CD8-positive, alpha-beta T cell (primary cell): ENCODE measurements at regions of chr12 and their contacts with region 1.

Region 1: DNA sequence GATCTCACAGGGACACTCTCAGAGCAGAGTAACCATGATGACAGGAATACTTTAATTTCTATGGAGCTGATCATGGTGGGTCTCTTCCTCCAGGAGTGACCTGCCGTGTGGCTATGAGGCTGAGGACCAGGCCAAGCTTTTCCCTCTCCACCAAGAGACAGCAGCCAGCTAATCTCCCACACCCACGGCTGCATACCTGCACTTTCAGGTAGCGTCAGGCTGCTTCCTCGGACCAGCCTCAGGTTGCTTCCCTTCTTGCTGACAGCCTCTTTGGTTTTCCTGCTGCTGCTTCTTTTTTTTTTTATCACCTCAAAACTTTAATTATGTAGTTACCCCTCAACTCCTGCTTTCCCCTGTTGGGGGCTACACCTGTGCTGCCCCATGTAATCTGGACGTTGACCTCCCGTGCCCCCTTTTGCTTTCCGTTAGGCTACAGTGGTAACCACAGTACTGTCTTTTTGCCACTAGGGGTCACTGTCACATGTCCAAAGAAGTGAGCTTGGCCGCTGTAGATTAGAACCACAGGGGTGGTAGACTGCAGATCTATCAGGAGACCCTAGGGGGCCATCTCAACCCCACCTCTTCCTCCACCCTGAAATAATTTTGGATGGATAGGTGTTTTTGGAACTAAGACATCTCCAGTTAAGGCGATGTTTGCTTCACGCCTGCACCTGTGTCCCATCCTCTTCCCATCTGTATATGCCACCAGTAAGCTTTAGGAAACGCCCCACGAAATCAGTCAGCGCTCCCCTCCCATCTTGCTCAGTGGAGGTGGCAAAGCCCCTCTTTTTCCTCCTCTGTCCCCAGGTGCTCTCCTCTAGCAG is 7.8 kb upstream of the PIP4K2C start:
- DNase-seq: peak; percentile 30 to 90 (median 74)
- ATAC-seq: peak; percentile 100
- H3K4me3 ChIP-seq: no peak overlapping the region
- H3K4me3 Mint-ChIP-seq: no peak overlapping the region
- H3K27ac ChIP-seq: no peak overlapping the region
- H3K27ac Mint-ChIP-seq: no peak overlapping the region
- H3K4me1 ChIP-seq: no peaks in the 10 kb centered on the region
- H3K4me1 Mint-ChIP-seq: peaks cover 2% of the 10 kb centered on the region
- H3K27me3 ChIP-seq: peaks cover 0 to 7% of the 10 kb centered on the region in 2 experiments
- H3K27me3 Mint-ChIP-seq: no peaks in the 10 kb centered on the region
- CTCF ChIP-seq: peak; percentile 95

Region 2: DNA sequence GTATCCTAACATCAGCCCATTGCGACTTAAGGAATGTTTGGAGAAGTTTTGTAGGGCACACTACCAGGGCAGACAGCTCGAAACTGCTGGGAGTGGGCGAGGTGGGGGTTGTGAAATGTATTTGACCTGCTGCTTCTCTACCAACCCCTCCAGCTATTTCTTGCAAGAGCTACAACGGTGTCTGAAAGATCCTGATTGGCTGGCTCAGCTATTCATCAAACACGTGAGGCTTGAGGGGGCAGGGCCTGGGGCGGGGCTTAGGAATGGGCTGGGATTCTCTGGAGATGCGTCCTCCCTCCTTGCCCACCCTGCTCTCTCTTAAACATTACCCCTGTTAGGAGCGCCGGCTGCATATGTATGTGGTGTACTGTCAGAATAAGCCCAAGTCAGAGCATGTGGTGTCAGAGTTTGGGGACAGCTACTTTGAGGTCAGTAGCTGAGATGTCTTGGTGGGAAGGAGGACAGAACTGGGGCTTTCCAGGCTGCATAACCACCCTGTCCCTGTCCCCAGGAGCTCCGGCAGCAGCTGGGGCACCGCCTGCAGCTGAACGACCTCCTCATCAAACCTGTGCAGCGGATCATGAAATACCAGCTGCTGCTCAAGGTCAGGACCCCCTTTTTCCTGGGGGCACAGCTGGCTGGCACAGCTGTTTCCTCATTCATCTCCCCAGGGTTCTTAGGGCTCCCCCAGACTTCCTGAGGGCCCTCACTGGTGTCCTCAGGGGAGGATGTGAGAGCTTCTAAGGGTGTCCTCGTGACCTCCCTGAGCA is 31.1 kb after region 1 on chr12:
- CTCF ChIA-PET with region 1: interaction called, 150 read pairs
- POLR2A ChIA-PET with region 1: no interaction called
- intact Hi-C with region 1: no loop called
- DNase-seq: peak in 1 of 9 experiments; percentile 27
- ATAC-seq: no peak
- H3K4me3 ChIP-seq: no peak overlapping the region
- H3K4me3 Mint-ChIP-seq: no peak overlapping the region
- H3K27ac ChIP-seq: no peak overlapping the region
- H3K27ac Mint-ChIP-seq: no peak overlapping the region
- H3K4me1 ChIP-seq: peaks cover 13% of the 10 kb centered on the region
- H3K4me1 Mint-ChIP-seq: peaks cover 12% of the 10 kb centered on the region
- H3K27me3 ChIP-seq: peaks cover 9 to 11% of the 10 kb centered on the region in 2 experiments
- H3K27me3 Mint-ChIP-seq: peaks cover 43% of the 10 kb centered on the region
- CTCF ChIP-seq: no peak

Region 3: DNA sequence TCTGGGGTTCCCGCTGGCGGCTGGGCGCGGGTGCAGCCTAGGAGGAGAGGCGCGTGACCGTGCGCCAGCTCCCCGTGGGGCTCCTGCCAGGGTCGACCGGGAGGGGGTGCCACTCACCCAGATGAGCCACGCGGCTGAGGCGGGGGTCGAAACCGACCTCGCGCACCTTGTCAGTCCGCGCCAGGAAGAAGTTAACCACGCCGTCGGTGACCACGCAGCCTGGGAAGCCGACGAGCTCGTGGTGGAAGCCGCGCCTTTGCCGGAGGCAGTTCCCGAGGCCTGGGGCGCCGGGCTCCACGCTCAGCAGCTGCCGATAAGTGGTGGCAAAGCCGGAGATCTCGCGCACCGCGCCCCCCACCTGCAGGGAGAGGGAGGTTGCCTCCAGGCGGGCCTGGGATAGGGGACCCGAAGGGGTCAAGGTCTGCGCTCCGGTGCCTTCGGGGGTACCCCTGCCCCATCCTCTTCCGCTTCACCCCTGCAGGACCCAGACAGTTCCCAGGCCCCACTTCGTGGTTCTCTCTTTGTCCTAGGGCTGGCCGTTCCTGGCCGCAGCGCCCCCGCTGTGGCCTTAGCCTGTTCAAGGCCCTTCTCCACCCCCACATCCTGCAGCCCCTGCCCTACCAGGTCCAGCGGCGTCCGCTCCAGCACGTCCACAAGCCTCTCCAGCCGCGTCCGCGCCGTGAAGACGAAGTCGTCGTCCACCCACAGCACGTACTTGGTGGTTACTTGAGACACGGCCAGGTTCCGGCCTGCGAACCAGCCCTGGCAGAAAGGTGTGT is 44.5 kb after region 1 on chr12:
- CTCF ChIA-PET with region 1: interaction called, 150 read pairs
- POLR2A ChIA-PET with region 1: interaction called, 3 read pairs
- intact Hi-C with region 1: no loop called
- DNase-seq: peak in 5 of 9 experiments; percentile 26 to 54 (median 42)
- ATAC-seq: peak; percentile 61
- H3K4me3 ChIP-seq: no peak overlapping the region
- H3K4me3 Mint-ChIP-seq: peak overlapping the region; percentile 59
- H3K27ac ChIP-seq: no peak overlapping the region
- H3K27ac Mint-ChIP-seq: no peak overlapping the region
- H3K4me1 ChIP-seq: peaks cover 15% of the 10 kb centered on the region
- H3K4me1 Mint-ChIP-seq: peaks cover 14% of the 10 kb centered on the region
- H3K27me3 ChIP-seq: peaks cover 46 to 66% of the 10 kb centered on the region in 2 experiments
- H3K27me3 Mint-ChIP-seq: peaks cover 78% of the 10 kb centered on the region
- CTCF ChIP-seq: peak; percentile 12

Region 4: DNA sequence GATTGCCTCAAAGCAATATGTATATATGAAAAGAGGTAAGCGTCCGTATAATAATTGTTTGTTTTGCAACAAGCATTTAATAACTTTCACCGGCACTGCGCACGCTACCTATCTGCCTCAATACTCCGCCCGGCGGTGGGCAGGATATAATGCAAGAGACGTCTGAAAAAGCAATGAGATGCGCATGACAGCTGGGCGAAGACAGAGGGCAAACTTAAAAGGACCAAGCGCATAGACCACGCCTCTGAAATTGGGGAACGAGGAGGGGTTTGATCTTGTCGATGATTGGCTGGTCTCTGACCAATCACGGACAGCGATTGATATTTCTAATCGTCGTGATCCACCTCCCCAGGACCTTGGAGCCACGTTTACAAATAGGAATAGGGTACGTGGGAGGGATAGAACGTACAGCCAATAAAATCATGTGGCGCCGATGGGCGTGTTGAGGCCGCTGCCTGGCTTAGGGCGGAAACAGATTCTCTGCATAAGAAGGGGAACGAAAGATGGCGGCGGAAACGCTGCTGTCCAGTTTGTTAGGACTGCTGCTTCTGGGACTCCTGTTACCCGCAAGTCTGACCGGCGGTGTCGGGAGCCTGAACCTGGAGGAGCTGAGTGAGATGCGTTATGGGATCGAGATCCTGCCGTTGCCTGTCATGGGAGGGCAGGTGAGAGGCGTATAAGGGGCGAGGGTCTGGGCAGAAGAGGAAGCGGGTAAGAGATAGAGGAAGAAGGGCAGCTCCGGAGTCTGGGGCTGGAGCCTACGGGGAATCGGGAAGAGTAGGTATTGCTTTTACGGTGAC is 110.6 kb after region 1 on chr12 and contains the start of gene OS9:
- CTCF ChIA-PET with region 1: interaction called, 15 read pairs
- POLR2A ChIA-PET with region 1: no interaction called
- intact Hi-C with region 1: loop called (anchors 1 to 2 kb)
- DNase-seq: peak; percentile 89 to 100 (median 92)
- ATAC-seq: peak; percentile 92
- H3K4me3 ChIP-seq: peak within 1 kb of the TSS; percentile 89 to 95
- H3K4me3 Mint-ChIP-seq: no peak within 1 kb of the TSS
- H3K27ac ChIP-seq: peak within 1 kb of the TSS; percentile 77 to 81
- H3K27ac Mint-ChIP-seq: no peak within 1 kb of the TSS
- H3K4me1 ChIP-seq: peaks cover 17% of the 10 kb centered on the region
- H3K4me1 Mint-ChIP-seq: peaks cover 18% of the 10 kb centered on the region
- H3K27me3 ChIP-seq: no peaks in the 10 kb centered on the region
- H3K27me3 Mint-ChIP-seq: peaks cover 5% of the 10 kb centered on the region
- CTCF ChIP-seq: peak; percentile 90
- total RNA-seq, gene OS9: 105 to 119 TPM